Caco-2 (cell line): ENCODE measurements at regions of chr2 and their contacts with region 1.

Region 1: GRCh38 chr2:184472481-184472880 is 125.8 kb upstream of the ZNF804A start:
- DNase-seq: peak; percentile 9 to 33
- H3K4me3 ChIP-seq: no peak overlapping the region
- H3K4me3 Mint-ChIP-seq: no peak overlapping the region
- H3K27ac Mint-ChIP-seq: no peak overlapping the region
- H3K4me1 ChIP-seq: no peaks in the 10 kb centered on the region
- H3K4me1 Mint-ChIP-seq: no peaks in the 10 kb centered on the region
- H3K27me3 ChIP-seq: no peaks in the 10 kb centered on the region
- H3K27me3 Mint-ChIP-seq: no peaks in the 10 kb centered on the region
- CTCF ChIP-seq: no peak

Region 2: DNA sequence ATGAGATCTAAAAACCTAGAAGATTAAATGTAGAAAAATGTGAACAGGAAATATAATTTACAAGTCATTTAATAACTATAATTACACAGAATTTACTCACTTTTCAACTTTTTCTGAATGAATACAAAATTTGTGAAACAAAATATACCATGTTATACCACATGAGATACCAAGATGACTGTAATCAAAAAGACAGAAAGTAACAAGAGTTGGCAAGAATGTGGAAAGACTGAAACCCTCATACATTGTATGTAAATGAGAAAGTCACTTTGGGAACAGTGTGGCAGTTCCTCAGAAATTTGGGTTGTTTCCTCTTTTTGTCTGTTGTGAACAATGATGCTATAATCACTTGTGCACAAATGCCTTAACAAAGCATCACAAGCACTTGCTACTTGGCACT is 19.6 kb before region 1 on chr2:
- CTCF ChIA-PET with region 1: no interaction called
- POLR2A ChIA-PET with region 1: no interaction called
- intact Hi-C with region 1: loop called (anchors 1 kb)
- DNase-seq: no peak
- H3K4me3 ChIP-seq: no peak overlapping the region
- H3K4me3 Mint-ChIP-seq: no peak overlapping the region
- H3K27ac Mint-ChIP-seq: no peak overlapping the region
- H3K4me1 ChIP-seq: no peaks in the 10 kb centered on the region
- H3K4me1 Mint-ChIP-seq: no peaks in the 10 kb centered on the region
- H3K27me3 ChIP-seq: no peaks in the 10 kb centered on the region
- H3K27me3 Mint-ChIP-seq: no peaks in the 10 kb centered on the region
- CTCF ChIP-seq: no peak

Region 3: GRCh38 chr2:184566716-184567115 is 94.2 kb after region 1 on chr2:
- CTCF ChIA-PET with region 1: no interaction called
- POLR2A ChIA-PET with region 1: no interaction called
- intact Hi-C with region 1: no loop called
- DNase-seq: no peak
- H3K4me3 ChIP-seq: no peak overlapping the region
- H3K4me3 Mint-ChIP-seq: no peak overlapping the region
- H3K27ac Mint-ChIP-seq: no peak overlapping the region
- H3K4me1 ChIP-seq: no peaks in the 10 kb centered on the region
- H3K4me1 Mint-ChIP-seq: no peaks in the 10 kb centered on the region
- H3K27me3 ChIP-seq: no peaks in the 10 kb centered on the region
- H3K27me3 Mint-ChIP-seq: no peaks in the 10 kb centered on the region
- CTCF ChIP-seq: no peak